ENCODE measurements at regions of chr11 and their contacts with region 1.

Region 1: DNA sequence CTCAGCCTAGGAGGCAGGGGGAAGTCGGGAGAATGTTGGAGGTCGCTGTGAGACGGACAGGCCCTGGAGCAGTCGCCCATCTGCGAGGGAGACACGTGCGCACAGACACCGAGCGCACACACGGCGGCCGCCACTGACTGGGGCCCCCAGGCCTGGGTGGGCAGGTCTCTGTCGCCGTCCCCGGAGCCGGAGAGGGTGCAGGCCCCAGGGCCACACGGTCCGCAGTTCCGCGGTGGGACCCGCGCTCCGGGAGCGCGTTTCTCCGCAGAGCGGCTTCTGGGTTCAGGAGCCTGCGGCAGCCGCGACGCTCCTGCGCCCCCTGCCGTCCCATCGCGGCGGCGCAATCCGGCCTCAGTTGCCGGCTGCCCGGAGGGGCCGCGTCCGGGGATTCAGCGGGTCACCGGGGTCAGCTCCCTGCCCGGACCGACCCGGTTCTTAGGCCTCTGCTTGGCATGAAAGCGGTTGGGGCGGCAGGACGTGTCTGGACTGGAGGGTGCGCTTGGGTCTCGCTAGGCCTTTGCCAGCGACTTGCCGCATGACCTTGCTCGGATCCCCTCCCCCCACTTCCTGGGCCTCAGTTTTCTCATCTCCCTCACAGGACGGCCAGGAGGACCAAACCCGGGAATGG is 31.2 kb downstream of the PDE2A start:
- DNase-seq: no peak
- H3K4me3 ChIP-seq: peak overlapping the region; percentile 64 to 71 (median 68)
- H3K27ac ChIP-seq: peak overlapping the region; percentile 46 to 72 (median 68)
- H3K4me1 ChIP-seq: peaks cover 22 to 45% (median 36%) of the 10 kb centered on the region in 4 donors
- H3K27me3 ChIP-seq: no peaks in the 10 kb centered on the region
- CTCF ChIP-seq: peak; percentile 96 to 99 (median 99)
- EP300 ChIP-seq: no peak
- POLR2A ChIP-seq: no peak

Region 2: GRCh38 chr11:72585762-72586311 is 57.2 kb before region 1 on chr11:
- intact Hi-C with region 1: loop called (anchors 2 kb)
- DNase-seq: no peak
- H3K4me3 ChIP-seq: no peak overlapping the region
- H3K27ac ChIP-seq: no peak overlapping the region
- H3K4me1 ChIP-seq: peaks cover 18 to 36% (median 27%) of the 10 kb centered on the region in 4 donors
- H3K27me3 ChIP-seq: peaks cover 0 to 40% (median 9%) of the 10 kb centered on the region in 4 donors
- CTCF ChIP-seq: peak in 2 of 3 experiments; percentile 90 to 92
- EP300 ChIP-seq: no peak
- POLR2A ChIP-seq: no peak

Region 3: DNA sequence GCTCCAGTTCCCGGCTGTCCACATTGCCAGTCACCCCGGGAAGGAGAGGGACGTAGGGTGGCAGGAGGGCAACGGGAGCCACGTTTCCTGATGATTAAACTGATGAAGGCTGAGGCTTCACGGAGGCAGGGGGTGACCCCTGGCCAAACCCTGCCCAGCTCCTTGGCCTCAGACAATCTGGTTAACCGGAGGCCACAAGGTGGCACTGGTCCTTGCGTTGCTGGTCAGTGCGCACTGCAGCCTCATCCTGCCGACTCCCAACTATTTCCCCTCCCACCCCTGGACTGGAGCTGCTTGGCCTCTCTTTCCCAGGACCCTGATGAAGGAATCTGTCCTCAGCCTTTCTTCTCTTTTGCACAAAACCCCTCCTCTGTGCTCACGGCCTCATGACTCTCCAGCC is 44.1 kb before region 1 on chr11:
- intact Hi-C with region 1: loop called (anchors 2 kb)
- DNase-seq: no peak
- H3K4me3 ChIP-seq: no peak overlapping the region
- H3K27ac ChIP-seq: no peak overlapping the region
- H3K4me1 ChIP-seq: peaks cover 0 to 8% (median 3%) of the 10 kb centered on the region in 4 donors
- H3K27me3 ChIP-seq: no peaks in the 10 kb centered on the region
- CTCF ChIP-seq: peak; percentile 58 to 68 (median 62)
- EP300 ChIP-seq: no peak
- POLR2A ChIP-seq: no peak